A549 (cell line): ENCODE measurements at regions of chr2 and their contacts with region 1.

Region 1: GRCh38 chr2:231674587-231675338 is 33.6 kb upstream of the PTMA start:
- DNase-seq: peak in 1 of 2 experiments; percentile 70
- ATAC-seq: peak; percentile 42 to 60
- H3K4me3 ChIP-seq: no peak overlapping the region
- H3K27ac ChIP-seq: peak overlapping the region; percentile 97
- H3K4me1 ChIP-seq: peaks cover 43% of the 10 kb centered on the region
- CTCF ChIP-seq: peak; percentile 81
- EP300 ChIP-seq: no peak
- POLR2A ChIP-seq: no peak
- RAD21 ChIP-seq: peak; percentile 75 to 79

Region 2: GRCh38 chr2:231228223-231228622 is 446.5 kb before region 1 on chr2:
- CTCF ChIA-PET with region 1: no interaction called
- POLR2A ChIA-PET with region 1: no interaction called
- DNase-seq: no peak
- ATAC-seq: peak; percentile 7 to 24; a peak in 2 of 6 replicates
- H3K4me3 ChIP-seq: no peak overlapping the region
- H3K27ac ChIP-seq: no peak overlapping the region
- H3K4me1 ChIP-seq: peaks cover 5% of the 10 kb centered on the region; the same call in 1 of the 3 replicates
- CTCF ChIP-seq: no peak
- EP300 ChIP-seq: no peak
- POLR2A ChIP-seq: no peak
- RAD21 ChIP-seq: no peak

Region 3: GRCh38 chr2:231563378-231563961 is 111.3 kb before region 1 on chr2:
- CTCF ChIA-PET with region 1: interaction called, 12 read pairs
- POLR2A ChIA-PET with region 1: no interaction called
- DNase-seq: peak; percentile 64 to 75
- ATAC-seq: peak; percentile 96 to 98
- H3K4me3 ChIP-seq: no peak overlapping the region
- H3K27ac ChIP-seq: no peak overlapping the region
- H3K4me1 ChIP-seq: no peaks in the 10 kb centered on the region
- CTCF ChIP-seq: peak; percentile 75
- EP300 ChIP-seq: no peak
- POLR2A ChIP-seq: no peak
- RAD21 ChIP-seq: peak; percentile 74 to 77

Region 4: GRCh38 chr2:231642631-231643494 is 31.9 kb before region 1 on chr2:
- CTCF ChIA-PET with region 1: interaction called, 4,158 read pairs
- POLR2A ChIA-PET with region 1: interaction called, 21 read pairs
- DNase-seq: peak; percentile 95 to 97
- ATAC-seq: peak; percentile 93
- H3K4me3 ChIP-seq: peak overlapping the region; percentile 16; the same call in 2 of the 3 replicates
- H3K27ac ChIP-seq: peak overlapping the region; percentile 93 to 96
- H3K4me1 ChIP-seq: peaks cover 49% of the 10 kb centered on the region
- CTCF ChIP-seq: no peak
- EP300 ChIP-seq: no peak; a peak in 1 of 5 replicates
- POLR2A ChIP-seq: peak; percentile 29; the same call in 1 of the 2 replicates
- RAD21 ChIP-seq: no peak

Region 5: GRCh38 chr2:231662028-231662810 is 12.5 kb before region 1 on chr2:
- CTCF ChIA-PET with region 1: interaction called, 4,158 read pairs
- POLR2A ChIA-PET with region 1: interaction called, 11 read pairs
- DNase-seq: peak; percentile 69 to 99
- ATAC-seq: peak; percentile 48 to 72
- H3K4me3 ChIP-seq: peak overlapping the region; percentile 40
- H3K27ac ChIP-seq: peak overlapping the region; percentile 88 to 100
- H3K4me1 ChIP-seq: peaks cover 20% of the 10 kb centered on the region
- CTCF ChIP-seq: no peak; the same call in 2 of the 3 replicates
- EP300 ChIP-seq: no peak
- POLR2A ChIP-seq: peak; percentile 51
- RAD21 ChIP-seq: 0 out of 5 replicates have a peak, but pooled peaks of 1 of the 2 experiments have one; percentile 34

Region 6: GRCh38 chr2:231745303-231746038 is 70.7 kb after region 1 on chr2:
- CTCF ChIA-PET with region 1: interaction called, 6 read pairs
- POLR2A ChIA-PET with region 1: interaction called, 10 read pairs
- DNase-seq: no peak
- ATAC-seq: no peak
- H3K4me3 ChIP-seq: no peak overlapping the region
- H3K27ac ChIP-seq: no peak overlapping the region
- H3K4me1 ChIP-seq: no peaks in the 10 kb centered on the region
- CTCF ChIP-seq: no peak
- EP300 ChIP-seq: no peak
- POLR2A ChIP-seq: no peak
- RAD21 ChIP-seq: no peak

Region 7: DNA sequence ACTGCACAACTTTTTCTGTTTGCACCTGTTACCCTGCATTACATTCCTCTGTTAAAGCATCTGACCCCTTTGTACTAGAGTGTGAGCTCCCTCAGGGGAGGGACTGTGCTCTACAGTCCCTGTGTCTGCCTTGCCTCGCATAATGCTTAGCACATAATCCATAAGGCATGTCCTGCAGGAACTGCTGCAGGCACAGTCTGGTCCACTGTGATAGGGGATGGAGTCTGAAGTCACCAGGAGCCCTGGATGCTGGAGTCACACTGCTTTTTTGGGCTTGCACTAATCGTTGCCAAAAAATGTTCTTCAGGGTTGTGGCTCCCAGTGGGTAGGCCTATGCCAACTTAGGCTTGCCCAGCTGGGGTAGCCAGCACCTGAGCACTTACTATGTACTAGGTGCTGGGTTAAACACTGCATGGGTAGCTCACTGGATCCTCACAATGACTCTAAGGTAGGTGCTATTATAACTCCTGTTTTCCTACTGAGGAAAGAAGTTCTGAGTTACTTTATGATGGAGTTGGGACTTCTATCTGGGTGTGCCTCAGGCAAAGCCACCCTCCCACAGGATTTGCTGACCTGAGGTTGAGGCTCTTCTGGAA is 144.8 kb after region 1 on chr2:
- CTCF ChIA-PET with region 1: no interaction called
- POLR2A ChIA-PET with region 1: no interaction called
- DNase-seq: no peak
- ATAC-seq: peak; percentile 50 to 59; a peak in 5 of 6 replicates
- H3K4me3 ChIP-seq: no peak overlapping the region
- H3K27ac ChIP-seq: no peak overlapping the region
- H3K4me1 ChIP-seq: no peaks in the 10 kb centered on the region
- CTCF ChIP-seq: no peak
- EP300 ChIP-seq: no peak
- POLR2A ChIP-seq: no peak
- RAD21 ChIP-seq: no peak